ENCODE measurements at regions of chr3 and their contacts with region 1.

Region 1: DNA sequence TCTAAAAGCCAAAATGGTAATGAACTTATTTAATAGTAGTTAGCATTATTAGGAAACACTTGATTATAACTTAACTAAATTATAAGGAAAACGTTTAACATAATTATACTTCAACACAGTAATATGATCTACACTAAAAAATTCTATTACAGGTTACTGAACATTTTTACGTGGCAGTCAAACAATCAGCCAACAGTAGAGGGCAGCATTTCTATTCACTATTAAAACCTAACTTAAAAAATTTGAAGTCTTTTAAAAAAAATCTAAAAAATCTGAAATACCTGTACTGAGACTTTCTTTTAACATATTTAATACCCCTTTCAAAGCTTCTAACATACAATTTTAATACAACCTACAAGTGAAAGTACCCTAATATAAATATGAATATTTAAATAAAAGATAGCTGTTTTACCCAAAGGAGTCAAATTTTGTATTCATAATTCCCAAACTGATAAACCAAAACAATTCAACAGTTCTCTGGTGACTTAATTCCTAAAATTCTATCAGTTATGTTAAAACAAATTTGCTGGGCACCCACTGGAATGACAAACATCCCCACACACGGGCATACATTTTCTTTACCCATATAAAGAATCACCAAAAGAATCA is 41.5 kb downstream of the DLG1 start:
- DNase-seq: no peak
- ATAC-seq: no peak

Region 2: GRCh38 chr3:197186887-197187588 is 69.9 kb before region 1 on chr3:
- intact Hi-C with region 1: no loop called
- DNase-seq: no peak
- ATAC-seq: no peak

Region 3: GRCh38 chr3:197456261-197457091 is 199.5 kb after region 1 on chr3:
- intact Hi-C with region 1: loop called (anchors 2 kb)
- DNase-seq: peak; percentile 91
- ATAC-seq: peak; percentile 92

Region 4: DNA sequence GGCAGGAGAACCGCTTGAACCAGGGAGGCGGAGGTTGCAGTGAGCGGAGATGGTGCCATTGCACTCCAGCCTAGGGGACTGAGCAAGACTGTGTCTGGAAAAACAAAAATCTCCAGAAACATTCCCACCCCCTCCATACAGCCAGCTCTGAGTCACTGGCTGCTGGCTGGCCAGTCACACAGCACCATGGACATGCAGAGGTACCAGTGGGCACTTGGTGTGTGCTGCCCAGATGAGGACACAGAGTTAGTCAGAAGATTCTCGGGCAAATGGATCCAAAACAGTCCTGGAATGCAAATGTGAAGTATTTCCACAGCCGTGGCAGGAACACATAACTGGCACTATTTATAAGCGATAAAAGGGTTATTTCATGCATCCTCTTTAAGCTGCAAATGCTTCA is 254.2 kb after region 1 on chr3:
- intact Hi-C with region 1: loop called (anchors 2 kb)
- DNase-seq: no peak
- ATAC-seq: no peak